CD4-positive, alpha-beta T cell (primary cell): ENCODE measurements at regions of chr5 and their contacts with region 1.

Region 1: GRCh38 chr5:134738133-134738962 is at the start of gene CAMLG:
- DNase-seq: peak; percentile 92 to 99 (median 96)
- ATAC-seq: peak; percentile 96
- H3K4me3 ChIP-seq: peak within 1 kb of the TSS; percentile 98
- H3K4me3 Mint-ChIP-seq: peak within 1 kb of the TSS; percentile 92
- H3K27ac ChIP-seq: peak within 1 kb of the TSS; percentile 77 to 93
- H3K27ac Mint-ChIP-seq: peak within 1 kb of the TSS; percentile 86
- H3K4me1 ChIP-seq: peaks cover 28% of the 10 kb centered on the region
- H3K4me1 Mint-ChIP-seq: peaks cover 34% of the 10 kb centered on the region
- H3K27me3 ChIP-seq: no peaks in the 10 kb centered on the region
- H3K27me3 Mint-ChIP-seq: no peaks in the 10 kb centered on the region
- CTCF ChIP-seq: peak; percentile 63
- total RNA-seq, gene CAMLG: 49.3 to 51.1 TPM

Region 2: DNA sequence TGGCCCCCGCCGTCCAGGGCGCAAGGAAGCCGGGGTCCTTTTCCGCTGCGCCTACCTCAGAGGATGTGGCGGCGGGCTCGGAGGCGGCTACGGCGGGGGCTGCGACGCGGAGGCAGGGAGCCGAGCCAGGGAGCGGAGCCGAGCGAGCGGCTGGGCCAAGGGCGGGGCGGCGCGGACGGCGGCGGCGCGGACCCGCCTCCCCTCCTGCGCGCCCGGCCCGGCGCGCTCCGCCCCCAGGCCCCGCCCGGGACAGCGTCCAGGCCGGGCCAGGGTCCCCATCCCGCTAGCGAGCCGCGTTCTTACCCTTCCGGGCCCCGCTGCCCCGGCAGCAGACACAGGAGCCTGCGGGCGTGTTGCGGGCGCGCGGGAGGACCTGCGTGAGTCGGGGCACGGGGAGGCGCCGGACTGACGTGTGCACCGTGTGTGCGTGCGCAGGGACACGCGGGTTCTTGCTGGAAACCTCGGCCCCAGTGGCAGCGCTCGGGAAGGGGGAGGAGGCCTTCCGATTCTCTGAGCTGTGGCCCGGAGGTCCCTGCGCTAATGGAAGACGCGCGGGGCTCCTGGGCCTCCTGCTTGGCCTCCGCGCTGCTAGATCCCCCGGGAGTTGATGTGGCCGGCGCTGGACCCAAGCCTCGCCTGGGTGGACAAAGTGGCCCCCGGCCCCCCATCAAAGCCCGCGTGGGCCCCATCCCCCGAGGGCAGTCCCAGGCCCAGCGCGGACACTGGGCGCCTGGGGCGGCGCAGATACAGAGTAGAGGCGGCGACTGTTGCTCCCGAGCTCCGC is 733.6 kb before region 1 on chr5 and contains the start of gene VDAC1:
- CTCF ChIA-PET with region 1: no interaction called
- POLR2A ChIA-PET with region 1: interaction called, 4 read pairs
- intact Hi-C with region 1: loop called in 1 of 2 experiments (anchors 10 kb)
- DNase-seq: peak; percentile 69 to 97 (median 80)
- ATAC-seq: peak; percentile 82
- H3K4me3 ChIP-seq: peak within 1 kb of the TSS; percentile 85
- H3K4me3 Mint-ChIP-seq: peak within 1 kb of the TSS; percentile 99
- H3K27ac ChIP-seq: peak within 1 kb of the TSS; percentile 77 to 91
- H3K27ac Mint-ChIP-seq: peak within 1 kb of the TSS; percentile 97
- H3K4me1 ChIP-seq: peaks cover 54% of the 10 kb centered on the region
- H3K4me1 Mint-ChIP-seq: peaks cover 48% of the 10 kb centered on the region
- H3K27me3 ChIP-seq: no peaks in the 10 kb centered on the region
- H3K27me3 Mint-ChIP-seq: no peaks in the 10 kb centered on the region
- CTCF ChIP-seq: no peak
- total RNA-seq, gene VDAC1: 46.8 to 50.9 TPM

Region 3: GRCh38 chr5:134304311-134304710 is 434.0 kb before region 1 on chr5:
- CTCF ChIA-PET with region 1: no interaction called
- POLR2A ChIA-PET with region 1: no interaction called
- intact Hi-C with region 1: loop called in 1 of 2 experiments (anchors 10 kb)
- DNase-seq: no peak
- ATAC-seq: no peak
- H3K4me3 ChIP-seq: no peak overlapping the region
- H3K4me3 Mint-ChIP-seq: no peak overlapping the region
- H3K27ac ChIP-seq: no peak overlapping the region
- H3K27ac Mint-ChIP-seq: no peak overlapping the region
- H3K4me1 ChIP-seq: peaks cover 3% of the 10 kb centered on the region
- H3K4me1 Mint-ChIP-seq: no peaks in the 10 kb centered on the region
- H3K27me3 ChIP-seq: no peaks in the 10 kb centered on the region
- H3K27me3 Mint-ChIP-seq: no peaks in the 10 kb centered on the region
- CTCF ChIP-seq: no peak

Region 4: GRCh38 chr5:134637161-134637582 is 101.2 kb before region 1 on chr5:
- CTCF ChIA-PET with region 1: interaction called, 3 read pairs
- POLR2A ChIA-PET with region 1: interaction called, 3 read pairs
- intact Hi-C with region 1: loop called in 1 of 2 experiments (anchors 5 kb)
- DNase-seq: no peak
- ATAC-seq: no peak
- H3K4me3 ChIP-seq: no peak overlapping the region
- H3K4me3 Mint-ChIP-seq: no peak overlapping the region
- H3K27ac ChIP-seq: no peak overlapping the region
- H3K27ac Mint-ChIP-seq: no peak overlapping the region
- H3K4me1 ChIP-seq: peaks cover 8% of the 10 kb centered on the region
- H3K4me1 Mint-ChIP-seq: peaks cover 12% of the 10 kb centered on the region
- H3K27me3 ChIP-seq: no peaks in the 10 kb centered on the region
- H3K27me3 Mint-ChIP-seq: no peaks in the 10 kb centered on the region
- CTCF ChIP-seq: no peak

Region 5: GRCh38 chr5:134758504-134759341 is 20.4 kb after region 1 on chr5 and contains the start of gene DDX46:
- CTCF ChIA-PET with region 1: interaction called, 78 read pairs
- POLR2A ChIA-PET with region 1: interaction called, 71 read pairs
- intact Hi-C with region 1: loop called (anchors 1 kb)
- DNase-seq: peak; percentile 89 to 97 (median 93)
- ATAC-seq: peak; percentile 99
- H3K4me3 ChIP-seq: peak within 1 kb of the TSS; percentile 91
- H3K4me3 Mint-ChIP-seq: peak within 1 kb of the TSS; percentile 100
- H3K27ac ChIP-seq: peak within 1 kb of the TSS; percentile 74 to 76
- H3K27ac Mint-ChIP-seq: peak within 1 kb of the TSS; percentile 95
- H3K4me1 ChIP-seq: peaks cover 22% of the 10 kb centered on the region
- H3K4me1 Mint-ChIP-seq: peaks cover 44% of the 10 kb centered on the region
- H3K27me3 ChIP-seq: no peaks in the 10 kb centered on the region
- H3K27me3 Mint-ChIP-seq: no peaks in the 10 kb centered on the region
- CTCF ChIP-seq: peak; percentile 89
- total RNA-seq, gene DDX46: 35.5 to 35.8 TPM

Region 6: GRCh38 chr5:134845852-134846640 is 107.7 kb after region 1 on chr5 and contains the start of gene C5orf24:
- CTCF ChIA-PET with region 1: interaction called, 8 read pairs
- POLR2A ChIA-PET with region 1: interaction called, 18 read pairs
- intact Hi-C with region 1: loop called (anchors 1 to 10 kb)
- DNase-seq: peak; percentile 83 to 98 (median 90)
- ATAC-seq: peak; percentile 90
- H3K4me3 ChIP-seq: peak within 1 kb of the TSS; percentile 76
- H3K4me3 Mint-ChIP-seq: peak within 1 kb of the TSS; percentile 86
- H3K27ac ChIP-seq: peak within 1 kb of the TSS; percentile 87
- H3K27ac Mint-ChIP-seq: peak within 1 kb of the TSS; percentile 95
- H3K4me1 ChIP-seq: peaks cover 35% of the 10 kb centered on the region
- H3K4me1 Mint-ChIP-seq: peaks cover 26% of the 10 kb centered on the region
- H3K27me3 ChIP-seq: no peaks in the 10 kb centered on the region
- H3K27me3 Mint-ChIP-seq: no peaks in the 10 kb centered on the region
- CTCF ChIP-seq: no peak
- total RNA-seq, gene C5orf24: 34.6 to 36.5 TPM

Region 7: DNA sequence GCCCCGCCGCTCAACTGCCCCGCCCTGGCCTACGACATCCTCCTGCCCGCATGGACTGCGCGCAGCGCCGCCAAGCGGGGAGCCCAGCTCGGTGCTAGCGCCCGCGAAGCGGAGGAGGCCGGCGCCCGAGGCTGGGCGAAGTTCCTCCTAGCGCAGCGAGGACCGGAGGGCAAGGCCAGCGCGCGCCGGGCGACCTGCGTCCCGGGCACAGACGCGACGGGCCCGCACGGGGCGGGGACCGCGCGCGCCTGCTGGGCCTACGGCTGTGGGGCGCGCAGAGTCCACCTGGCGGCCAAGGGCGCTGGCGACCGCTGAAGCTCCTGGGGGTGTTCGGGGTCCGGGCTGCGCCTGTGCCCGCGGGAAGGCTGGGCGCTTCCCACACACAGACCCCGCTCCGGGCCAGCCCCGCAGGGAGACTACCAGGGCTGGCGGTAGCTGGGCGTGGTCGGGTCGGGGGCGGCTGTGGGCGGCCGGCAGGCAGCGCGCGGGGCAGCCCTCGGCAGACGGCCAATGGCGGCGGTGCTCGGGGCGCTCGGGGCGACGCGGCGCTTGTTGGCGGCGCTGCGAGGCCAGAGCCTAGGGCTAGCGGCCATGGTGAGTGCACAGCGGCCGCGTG is 166.4 kb after region 1 on chr5 and contains the start of gene PCBD2:
- CTCF ChIA-PET with region 1: interaction called, 25 read pairs
- POLR2A ChIA-PET with region 1: interaction called, 48 read pairs
- intact Hi-C with region 1: loop called (anchors 1 kb)
- DNase-seq: peak; percentile 83 to 96 (median 90)
- ATAC-seq: peak; percentile 85
- H3K4me3 ChIP-seq: peak within 1 kb of the TSS; percentile 87
- H3K4me3 Mint-ChIP-seq: peak within 1 kb of the TSS; percentile 99
- H3K27ac ChIP-seq: peak within 1 kb of the TSS; percentile 83 to 85
- H3K27ac Mint-ChIP-seq: peak within 1 kb of the TSS; percentile 95
- H3K4me1 ChIP-seq: peaks cover 22% of the 10 kb centered on the region
- H3K4me1 Mint-ChIP-seq: peaks cover 15% of the 10 kb centered on the region
- H3K27me3 ChIP-seq: no peaks in the 10 kb centered on the region
- H3K27me3 Mint-ChIP-seq: no peaks in the 10 kb centered on the region
- CTCF ChIP-seq: peak; percentile 81
- total RNA-seq, gene PCBD2: 5.2 to 5.8 TPM

Region 8: DNA sequence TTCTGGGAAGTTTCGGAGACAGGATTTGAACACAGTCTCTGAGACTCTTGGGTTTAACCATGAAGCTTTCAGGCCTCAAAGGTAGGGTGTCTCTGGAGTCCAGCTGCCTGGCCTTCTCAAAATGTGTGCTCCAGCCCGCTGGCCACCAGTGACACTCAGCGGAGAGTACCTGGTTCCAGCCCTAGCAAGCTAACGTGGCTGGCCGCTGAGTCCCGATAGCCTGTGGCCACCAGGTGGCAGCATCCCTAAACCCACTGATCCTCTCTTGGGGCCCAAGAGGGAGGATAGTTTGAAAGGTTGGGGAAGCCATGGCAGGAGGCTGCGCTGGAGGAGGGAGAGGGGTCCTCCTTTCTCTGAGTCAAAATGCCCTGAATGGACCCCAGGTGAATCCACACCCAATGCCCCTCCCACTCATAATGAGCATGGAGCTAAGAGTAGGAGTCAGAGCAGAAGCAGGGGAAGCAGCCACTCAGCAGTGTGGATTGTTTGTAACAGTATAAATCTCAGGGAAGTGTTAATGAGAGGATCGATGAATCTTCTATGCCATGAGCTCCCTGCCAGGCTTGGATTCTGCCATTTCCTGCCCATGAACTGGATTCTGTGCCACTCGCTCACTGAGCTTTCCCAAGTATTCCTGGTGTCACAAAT is 719.2 kb after region 1 on chr5:
- CTCF ChIA-PET with region 1: no interaction called
- POLR2A ChIA-PET with region 1: no interaction called
- intact Hi-C with region 1: no loop called
- DNase-seq: peak; percentile 22 to 71 (median 43)
- ATAC-seq: peak; percentile 57
- H3K4me3 ChIP-seq: no peak overlapping the region
- H3K4me3 Mint-ChIP-seq: no peak overlapping the region
- H3K27ac ChIP-seq: no peak overlapping the region
- H3K27ac Mint-ChIP-seq: no peak overlapping the region
- H3K4me1 ChIP-seq: peaks cover 7% of the 10 kb centered on the region
- H3K4me1 Mint-ChIP-seq: peaks cover 5% of the 10 kb centered on the region
- H3K27me3 ChIP-seq: peaks cover 0 to 7% of the 10 kb centered on the region in 2 experiments
- H3K27me3 Mint-ChIP-seq: peaks cover 41% of the 10 kb centered on the region
- CTCF ChIP-seq: peak; percentile 80